ENCODE measurements at regions of chr7 and their contacts with region 1.

Region 1: DNA sequence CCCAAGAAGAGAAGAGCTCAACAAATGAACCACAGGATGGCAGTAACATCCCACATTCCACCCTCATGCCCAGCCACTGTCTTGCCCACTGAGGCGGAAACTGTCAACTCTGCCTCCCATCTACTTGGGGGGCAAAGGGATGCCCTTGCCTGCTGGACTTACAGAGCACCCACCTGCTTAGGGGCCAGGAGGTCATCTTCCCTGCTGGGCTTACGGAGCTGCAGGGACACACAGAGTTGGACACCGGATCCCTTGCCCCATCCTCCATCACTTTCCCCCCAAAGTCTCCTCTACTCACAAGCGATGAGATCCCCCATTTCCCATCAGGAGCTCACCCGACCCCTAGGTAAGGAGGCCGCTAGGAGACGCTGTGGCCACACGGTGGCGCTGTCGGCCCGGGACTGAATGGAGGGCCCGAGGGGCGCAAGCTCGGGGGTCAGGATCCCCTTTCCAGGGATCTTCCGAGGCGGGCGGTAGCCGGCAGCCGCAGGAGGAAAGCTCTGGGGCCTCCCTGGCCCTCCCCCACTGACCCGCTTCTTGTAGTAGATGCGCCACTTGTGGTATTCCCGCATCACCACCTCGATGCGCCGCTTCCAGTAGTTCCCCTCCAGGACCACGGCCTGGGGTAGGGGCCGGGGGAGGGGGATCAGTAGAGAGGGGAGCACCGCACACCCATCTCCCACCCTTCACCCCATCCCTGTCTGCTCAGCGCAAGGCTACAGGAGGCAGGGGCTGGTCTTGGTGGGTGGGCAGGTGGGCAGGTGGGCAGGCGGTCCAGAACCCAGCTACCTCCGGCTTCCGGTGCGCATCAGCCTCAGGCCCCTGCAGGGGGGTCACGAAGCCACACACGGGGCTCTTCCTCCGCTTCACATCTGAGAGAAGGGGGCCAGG is 17.3 kb downstream of the MLXIPL start:
- DNase-seq: no peak
- H3K4me3 ChIP-seq: no peak overlapping the region
- CTCF ChIP-seq: peak in 1 of 3 donors; percentile 65
- POLR2A ChIP-seq: no peak

Region 2: DNA sequence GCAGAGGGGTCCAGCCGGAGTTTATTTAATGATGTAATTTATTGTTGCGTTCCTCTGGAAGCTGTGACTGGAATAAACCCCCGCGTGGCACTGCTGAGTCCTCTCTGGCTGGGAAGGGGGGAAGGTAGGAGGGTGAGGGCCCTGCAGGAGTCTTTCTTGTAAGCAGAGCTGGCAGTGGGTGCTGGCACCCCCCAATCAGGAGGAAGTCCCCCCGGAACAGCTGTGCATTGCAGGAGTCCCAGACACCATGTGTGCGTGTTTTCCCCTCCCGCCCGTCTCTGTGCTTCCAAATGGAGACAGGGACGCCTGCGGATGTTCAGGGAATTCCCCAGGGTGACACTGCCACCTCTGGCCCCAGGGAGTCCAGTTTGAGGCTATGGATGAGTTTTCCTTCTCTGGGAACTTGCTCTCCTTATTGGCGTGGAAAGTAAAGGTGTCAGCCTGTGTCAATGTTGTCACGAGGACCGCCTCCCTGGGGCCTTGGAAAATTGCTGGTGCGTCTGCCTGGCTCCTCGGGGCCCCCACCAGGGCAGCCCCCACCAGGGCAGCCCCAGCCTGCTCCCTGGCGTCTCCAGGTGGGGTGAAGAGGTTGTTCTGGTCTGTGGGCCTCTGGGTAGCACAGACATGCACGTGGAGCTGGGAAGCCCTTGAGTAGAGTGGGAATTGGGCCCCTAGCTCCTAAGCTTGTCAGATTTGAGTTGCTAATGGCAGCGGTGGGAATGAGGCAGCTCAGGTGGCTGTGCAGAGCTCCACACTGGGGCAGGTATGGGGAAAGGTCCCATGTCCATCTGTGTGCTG is 170.8 kb before region 1 on chr7:
- intact Hi-C with region 1: no loop called
- DNase-seq: no peak
- H3K4me3 ChIP-seq: no peak overlapping the region
- CTCF ChIP-seq: no peak
- POLR2A ChIP-seq: no peak

Region 3: DNA sequence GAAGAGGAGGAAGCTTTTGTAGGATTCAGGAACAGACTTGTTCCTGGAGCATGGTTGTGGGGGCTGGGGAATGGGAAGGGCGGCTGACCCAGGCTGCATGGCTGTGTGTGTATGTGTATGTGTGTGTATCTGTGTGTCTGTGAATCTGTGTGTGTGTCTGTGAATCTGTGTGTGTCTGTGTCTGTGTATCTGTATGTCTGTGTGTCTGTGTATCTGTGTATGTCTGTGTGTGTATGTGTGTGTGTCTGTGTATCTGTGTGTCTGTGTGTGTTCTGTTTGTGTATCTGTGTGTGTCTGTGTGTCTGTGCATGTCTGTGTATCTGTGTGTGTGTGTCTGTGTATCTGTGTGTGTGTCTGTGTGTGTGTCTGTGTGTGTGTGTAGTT is 119.0 kb after region 1 on chr7:
- intact Hi-C with region 1: loop called (anchors 5 kb)
- DNase-seq: no peak
- H3K4me3 ChIP-seq: no peak overlapping the region
- CTCF ChIP-seq: no peak
- POLR2A ChIP-seq: no peak

Measured in lower leg skin (tissue), 4 donors.